Dorsolateral prefrontal cortex (tissue), 120 donors: ENCODE measurements at regions of chr5 and their contacts with region 1.

Region 1: DNA sequence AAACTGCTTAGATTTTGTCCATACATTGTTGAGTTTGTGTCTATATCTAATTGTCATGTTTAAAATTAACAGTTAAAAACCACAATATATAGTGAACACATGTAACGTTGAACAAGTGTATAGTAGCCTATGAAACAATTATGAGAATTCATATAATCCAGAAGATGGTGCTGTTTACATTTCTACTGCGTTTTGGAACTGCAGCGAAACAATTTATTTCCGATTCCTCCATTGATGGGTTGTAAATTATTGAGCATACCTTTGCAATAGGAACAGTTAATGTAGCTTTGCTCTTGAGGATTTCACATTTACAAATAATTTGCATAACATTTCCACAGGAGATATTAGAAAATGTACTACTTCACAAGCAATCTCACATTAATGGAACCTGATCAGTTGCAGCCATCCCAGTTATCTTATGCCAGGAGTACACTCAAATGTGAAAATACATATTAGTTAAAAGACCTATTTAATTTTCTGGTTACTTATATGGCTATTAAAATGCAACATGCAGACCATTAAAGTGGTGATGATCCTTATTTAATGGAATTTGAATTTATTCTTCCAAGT is 411.8 kb downstream of the CDH10 start:
- DNase-seq: no peak
- H3K4me3 ChIP-seq: peak overlapping the region in 5 of 59 donors; percentile 4 to 29 (median 14)
- H3K27ac ChIP-seq: no peak overlapping the region
- H3K27me3 ChIP-seq: no peaks in the 10 kb centered on the region
- CTCF ChIP-seq: peak in 47 of 56 donors; percentile 9 to 51 (median 34)

Region 2: DNA sequence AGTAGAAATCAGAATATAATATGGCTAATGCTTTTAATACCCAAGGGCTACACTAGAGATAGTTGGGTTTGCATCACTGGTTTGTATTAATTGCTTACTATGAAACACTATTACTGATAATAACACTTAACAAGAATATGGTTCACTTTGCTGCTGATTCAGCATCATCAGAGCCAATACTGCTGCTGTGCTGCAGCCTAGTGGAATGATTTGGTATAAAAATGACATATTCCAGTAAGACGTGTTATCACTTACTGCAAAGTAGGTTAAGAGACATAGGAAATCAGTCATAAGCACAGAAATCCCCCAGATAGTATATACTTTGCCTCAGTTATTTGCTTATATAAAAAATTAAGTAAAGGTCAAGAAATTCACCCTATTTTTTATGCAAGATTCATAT is 409.0 kb after region 1 on chr5:
- intact Hi-C with region 1: loop called in 1 of 2 experiments (anchors 10 kb)
- DNase-seq: peak in 2 of 10 donors; percentile 33 to 53
- H3K4me3 ChIP-seq: peak overlapping the region in 58 of 59 donors; percentile 8 to 72 (median 54)
- H3K27ac ChIP-seq: peak overlapping the region in 41 of 59 donors; percentile 1 to 87 (median 73)
- H3K27me3 ChIP-seq: peaks cover 0 to 61% (median 0%) of the 10 kb centered on the region in 45 donors
- CTCF ChIP-seq: peak in 55 of 56 donors; percentile 35 to 74 (median 61)